ENCODE measurements at regions of chr6 and their contacts with region 1.

Region 1: DNA sequence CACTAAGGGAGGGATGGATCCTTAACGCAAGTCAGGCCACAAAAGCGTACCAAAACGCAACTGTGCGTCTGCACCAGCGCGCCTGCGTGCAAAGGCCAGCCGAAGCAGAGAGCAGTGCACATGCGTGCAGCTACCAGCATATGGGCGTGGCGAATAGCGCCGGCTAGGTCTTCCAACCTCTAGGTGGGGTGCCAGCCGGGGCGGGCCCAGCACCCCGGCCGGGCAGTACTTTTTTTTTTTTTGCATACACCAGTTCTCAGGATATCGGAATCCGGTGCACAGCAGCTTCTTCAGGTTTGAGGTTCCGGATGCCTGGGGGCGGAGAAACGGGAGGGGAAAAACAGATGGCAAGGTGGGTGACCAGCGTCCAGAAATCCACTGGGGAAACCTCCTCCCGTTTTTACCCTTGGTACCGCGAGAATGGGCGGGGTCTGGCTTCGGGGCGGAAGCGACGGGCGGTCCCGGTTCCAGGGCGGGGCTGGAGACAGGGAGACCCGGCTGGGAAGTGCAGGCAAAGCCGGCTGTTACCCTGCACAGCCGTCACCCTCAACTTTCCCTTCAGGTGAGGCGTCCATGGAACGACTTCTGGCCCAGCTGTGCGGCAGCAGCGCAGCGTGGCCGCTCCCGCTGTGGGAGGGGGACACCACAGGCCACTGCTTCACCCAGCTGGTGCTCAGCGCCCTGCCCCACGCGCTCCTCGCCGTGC is at the start of gene ABCC10:
- DNase-seq: peak; percentile 95 to 96
- H3K4me3 ChIP-seq: peak within 1 kb of the TSS; percentile 96
- H3K4me3 Mint-ChIP-seq: peak within 1 kb of the TSS; percentile 85
- H3K27ac Mint-ChIP-seq: peak within 1 kb of the TSS; percentile 80
- H3K4me1 ChIP-seq: 0 out of 2 replicates have a peak, but pooled peaks cover 4% of the 10 kb centered on the region
- H3K4me1 Mint-ChIP-seq: peaks cover 11% of the 10 kb centered on the region
- H3K27me3 ChIP-seq: no peaks in the 10 kb centered on the region
- H3K27me3 Mint-ChIP-seq: no peaks in the 10 kb centered on the region
- CTCF ChIP-seq: peak; percentile 29 to 62
- total RNA-seq, gene ABCC10: 40.1 and 45.1 TPM in 2 replicates

Region 2: DNA sequence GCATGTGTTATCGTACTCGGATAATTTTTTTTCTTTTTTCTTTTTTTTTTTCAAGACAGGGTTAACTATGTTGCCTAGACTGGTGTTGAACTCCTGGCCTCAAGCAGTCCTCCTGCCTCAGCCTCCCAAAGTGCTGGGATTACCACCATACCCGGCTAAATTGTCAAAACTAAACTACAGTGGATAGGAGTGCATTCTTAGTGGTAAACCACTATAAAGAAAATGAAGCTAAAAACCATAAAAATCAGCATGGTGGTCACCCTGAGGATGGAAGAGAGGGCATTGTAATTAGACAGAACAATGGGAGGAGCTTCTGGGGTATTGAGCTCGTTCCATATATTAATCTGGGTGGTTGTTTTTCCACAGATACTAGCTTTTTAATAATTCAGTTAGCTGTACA is 51.9 kb before region 1 on chr6:
- CTCF ChIA-PET with region 1: no interaction called
- POLR2A ChIA-PET with region 1: no interaction called
- intact Hi-C with region 1: no loop called
- DNase-seq: no peak
- H3K4me3 ChIP-seq: no peak overlapping the region
- H3K4me3 Mint-ChIP-seq: no peak overlapping the region
- H3K27ac Mint-ChIP-seq: no peak overlapping the region
- H3K4me1 ChIP-seq: peaks cover 8% of the 10 kb centered on the region; the same call in 1 of the 2 replicates
- H3K4me1 Mint-ChIP-seq: no peaks in the 10 kb centered on the region
- H3K27me3 ChIP-seq: no peaks in the 10 kb centered on the region
- H3K27me3 Mint-ChIP-seq: peaks cover 3% of the 10 kb centered on the region
- CTCF ChIP-seq: no peak

Region 3: GRCh38 chr6:43391440-43392031 is 36.0 kb before region 1 on chr6:
- CTCF ChIA-PET with region 1: no interaction called
- POLR2A ChIA-PET with region 1: interaction called, 12 read pairs
- intact Hi-C with region 1: loop called (anchors 5 kb)
- DNase-seq: no peak
- H3K4me3 ChIP-seq: no peak overlapping the region
- H3K4me3 Mint-ChIP-seq: no peak overlapping the region
- H3K27ac Mint-ChIP-seq: peak overlapping the region; percentile 72
- H3K4me1 ChIP-seq: peaks cover 50% of the 10 kb centered on the region
- H3K4me1 Mint-ChIP-seq: peaks cover 60% of the 10 kb centered on the region
- H3K27me3 ChIP-seq: no peaks in the 10 kb centered on the region
- H3K27me3 Mint-ChIP-seq: no peaks in the 10 kb centered on the region
- CTCF ChIP-seq: no peak

Measured in Caco-2 (cell line).